HEK293 (cell line): ENCODE measurements at regions of chr12 and their contacts with region 1.

Region 1: DNA sequence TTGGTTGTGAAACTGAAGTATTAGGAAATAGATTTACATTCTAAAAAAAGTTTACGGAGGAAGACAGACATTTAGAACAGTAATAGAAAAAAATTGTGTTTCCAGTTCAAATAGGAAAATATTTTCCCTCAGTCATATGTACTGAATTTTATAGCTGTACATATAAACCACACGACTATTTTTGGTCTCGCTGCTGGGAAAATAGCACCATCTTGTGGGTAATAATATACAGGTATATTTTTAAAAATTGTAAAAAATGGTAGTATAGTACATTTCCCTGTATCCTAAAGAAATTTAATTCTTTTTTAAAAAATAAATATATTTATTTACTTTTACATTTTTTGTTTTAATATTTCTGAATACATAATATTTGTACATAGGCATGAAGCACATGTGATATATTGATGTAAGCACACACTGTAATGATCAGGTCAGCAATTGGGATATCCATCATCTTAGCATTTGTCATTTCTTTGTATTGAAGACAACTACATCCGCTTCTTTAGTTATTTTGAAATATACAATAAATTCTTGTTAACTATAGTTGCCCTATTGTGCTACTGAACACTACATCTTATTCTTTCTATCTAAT is 168.6 kb downstream of the ALX1 start:
- H3K4me3 ChIP-seq: no peak overlapping the region
- H3K27ac ChIP-seq: no peak overlapping the region
- H3K4me1 ChIP-seq: no peaks in the 10 kb centered on the region
- CTCF ChIP-seq: no peak

Region 2: GRCh38 chr12:85076688-85077430 is 371.8 kb before region 1 on chr12:
- CTCF ChIA-PET with region 1: interaction called, 10 read pairs
- POLR2A ChIA-PET with region 1: no interaction called
- H3K4me3 ChIP-seq: no peak overlapping the region
- H3K27ac ChIP-seq: no peak overlapping the region
- H3K4me1 ChIP-seq: no peaks in the 10 kb centered on the region
- CTCF ChIP-seq: 0 out of 2 replicates have a peak, but pooled peaks have one; percentile 9

Region 3: DNA sequence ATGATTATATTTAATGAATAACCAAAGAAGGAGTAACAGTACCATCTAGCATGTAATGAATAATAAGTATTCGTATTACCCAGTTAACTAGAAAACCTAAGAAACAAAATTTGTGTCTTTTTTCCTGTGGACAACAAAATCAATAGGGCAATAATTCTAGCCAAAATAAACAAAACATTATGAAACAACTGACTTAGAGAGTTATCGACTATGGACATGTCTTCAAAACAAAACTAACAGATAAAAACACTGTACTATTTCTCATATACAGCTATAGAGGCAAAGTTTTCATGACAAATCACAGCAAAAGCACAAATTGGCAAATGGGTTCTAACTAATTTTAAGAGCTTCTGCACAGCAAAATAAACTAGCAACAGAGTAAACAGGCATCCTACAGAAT is 55.5 kb after region 1 on chr12:
- CTCF ChIA-PET with region 1: no interaction called
- POLR2A ChIA-PET with region 1: no interaction called
- H3K4me3 ChIP-seq: no peak overlapping the region
- H3K27ac ChIP-seq: no peak overlapping the region
- H3K4me1 ChIP-seq: no peaks in the 10 kb centered on the region
- CTCF ChIP-seq: no peak